G401 (cell line): ENCODE measurements at regions of chr2 and their contacts with region 1.

Region 1: GRCh38 chr2:117933884-117934354 is 80.0 kb downstream of the CCDC93 start:
- DNase-seq: no peak

Region 2: GRCh38 chr2:117968722-117969121 is 34.8 kb after region 1 on chr2:
- in situ Hi-C with region 1: loop called (anchors 5 kb)
- DNase-seq: no peak